GM10248 (cell line): ENCODE measurements at regions of chr17 and their contacts with region 1.

Region 1: DNA sequence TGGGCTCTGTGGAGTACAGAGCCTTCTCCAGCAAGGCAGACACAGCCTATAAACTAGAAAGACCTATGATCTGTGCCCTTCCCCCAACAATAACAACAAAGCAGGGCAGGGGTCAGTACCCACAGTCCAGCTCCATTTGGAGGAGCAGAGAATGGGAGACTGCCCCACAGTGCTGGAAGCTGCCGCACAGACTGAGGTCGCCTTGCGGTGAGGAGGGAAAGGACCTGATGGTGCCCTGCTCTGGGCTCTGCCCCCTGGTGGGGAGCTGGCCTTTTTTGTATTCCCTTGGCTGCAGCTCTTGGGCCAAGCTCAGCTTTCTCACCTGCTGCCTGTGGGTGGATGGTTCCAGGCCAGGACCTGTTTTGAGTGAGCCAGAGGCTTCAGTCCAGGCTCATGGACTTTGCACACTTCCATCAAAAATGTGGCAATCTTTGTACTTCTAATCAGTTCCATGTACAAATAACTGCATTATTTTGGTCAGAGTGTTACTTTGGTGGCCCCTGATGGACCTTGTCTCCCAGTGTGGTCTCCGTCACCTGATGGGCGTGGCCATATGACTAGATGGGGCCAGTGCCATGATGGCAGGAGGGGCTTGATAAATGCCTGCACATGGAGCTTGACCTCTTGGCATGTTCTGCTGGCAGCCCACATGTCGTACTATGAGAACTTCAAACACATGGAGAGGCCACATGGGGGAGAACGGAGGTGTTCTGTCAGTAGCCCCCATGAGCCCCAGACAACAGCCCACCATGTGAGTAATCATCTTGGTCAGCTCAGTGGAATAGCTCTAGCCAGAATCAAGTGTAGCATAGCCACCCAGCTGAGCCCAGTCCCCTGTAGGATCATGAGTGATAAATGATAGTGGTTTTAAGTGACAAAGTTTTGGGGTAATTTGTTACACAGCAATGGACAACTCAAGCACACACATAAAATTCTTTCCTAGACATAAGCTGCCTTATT is 24.2 kb downstream of the B9D1 start:
- DNase-seq: peak; percentile 84
- CTCF ChIP-seq: peak; percentile 66

Region 2: DNA sequence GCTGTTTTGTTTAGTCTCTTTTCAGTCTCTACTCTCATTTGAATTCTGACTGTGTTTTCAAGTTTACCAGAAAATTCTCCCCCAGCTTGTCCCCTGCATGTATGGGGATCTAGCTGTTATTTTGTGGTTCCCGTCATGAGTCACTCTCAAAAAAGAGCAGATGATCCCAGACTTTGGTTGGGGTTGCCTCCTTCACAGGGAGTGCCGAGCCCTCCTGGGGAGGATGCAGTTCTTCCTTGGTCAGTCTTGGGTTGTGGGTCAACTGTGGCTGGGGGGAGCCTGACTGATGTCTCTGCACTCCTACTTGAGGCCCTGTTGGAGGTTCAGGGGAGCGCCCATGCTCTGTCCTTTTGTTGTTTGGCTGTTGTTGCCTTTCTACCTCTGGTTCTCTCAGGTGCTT is 63.4 kb before region 1 on chr17:
- CTCF ChIA-PET with region 1: no interaction called
- POLR2A ChIA-PET with region 1: no interaction called
- DNase-seq: no peak
- CTCF ChIP-seq: no peak

Region 3: GRCh38 chr17:19327039-19327776 is 11.1 kb before region 1 on chr17:
- CTCF ChIA-PET with region 1: interaction called, 18 read pairs
- POLR2A ChIA-PET with region 1: no interaction called
- DNase-seq: no peak
- CTCF ChIP-seq: no peak